ENCODE measurements at regions of chr2 and their contacts with region 1.

Region 1: DNA sequence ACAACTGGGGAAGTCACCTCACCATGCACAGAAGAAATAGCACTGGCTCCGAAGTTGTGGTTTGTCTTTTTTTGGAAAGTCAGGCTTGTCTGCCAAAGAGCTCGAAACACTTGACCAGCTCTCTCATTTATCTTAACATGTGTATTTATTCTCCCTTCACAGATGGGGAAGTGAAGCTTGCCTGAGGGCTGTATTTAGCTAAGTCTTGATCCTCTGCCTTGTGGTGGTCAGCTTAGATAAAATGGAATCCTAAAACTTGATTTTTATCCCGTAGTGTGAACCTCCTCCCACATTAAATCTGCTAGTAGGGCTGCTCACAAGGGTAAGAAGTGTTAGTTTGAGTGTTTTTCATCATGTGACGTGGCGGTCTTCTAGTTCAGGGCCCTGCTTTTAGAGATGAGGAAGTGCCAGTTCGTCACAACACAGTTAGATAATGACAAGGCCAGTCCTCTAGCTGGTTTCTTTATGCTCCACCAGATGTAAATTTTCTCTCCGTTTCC is 89.7 kb downstream of the TMEM247 start:
- DNase-seq: no peak
- ATAC-seq: no peak
- H3K4me3 Mint-ChIP-seq: no peak overlapping the region
- H3K27ac Mint-ChIP-seq: peak overlapping the region; percentile 14; the same call in 1 of the 2 replicates
- H3K4me1 Mint-ChIP-seq: peaks cover 35% of the 10 kb centered on the region
- H3K27me3 Mint-ChIP-seq: no peaks in the 10 kb centered on the region
- CTCF ChIP-seq: no peak

Region 2: DNA sequence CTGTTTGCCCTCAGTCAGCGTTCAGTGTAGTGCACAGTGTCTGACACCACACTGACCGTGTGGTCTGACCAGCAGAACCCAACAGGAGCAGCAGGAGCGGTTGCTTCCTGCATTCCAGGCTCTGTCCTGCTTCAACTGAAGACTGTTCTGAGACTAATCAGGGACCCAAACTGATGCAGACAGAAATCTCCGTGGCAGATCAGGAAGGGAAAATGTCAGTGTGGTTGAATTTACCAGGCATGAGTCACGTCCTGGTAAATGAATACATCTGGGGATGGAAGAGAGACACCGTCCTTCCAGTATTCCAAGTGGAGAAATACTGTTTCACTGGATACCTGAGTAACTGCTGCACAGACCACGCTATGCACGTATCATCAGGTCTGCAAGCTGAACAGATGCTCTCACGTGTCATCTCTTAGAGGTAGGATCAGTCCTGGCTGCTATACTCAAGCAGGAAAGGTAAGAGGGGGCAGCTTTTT is 495.5 kb before region 1 on chr2:
- CTCF ChIA-PET with region 1: no interaction called
- POLR2A ChIA-PET with region 1: no interaction called
- DNase-seq: no peak
- ATAC-seq: peak; percentile 24; the same call in 1 of the 2 replicates
- H3K4me3 Mint-ChIP-seq: no peak overlapping the region
- H3K27ac Mint-ChIP-seq: no peak overlapping the region
- H3K4me1 Mint-ChIP-seq: peaks cover 17% of the 10 kb centered on the region
- H3K27me3 Mint-ChIP-seq: no peaks in the 10 kb centered on the region
- CTCF ChIP-seq: no peak

Region 3: DNA sequence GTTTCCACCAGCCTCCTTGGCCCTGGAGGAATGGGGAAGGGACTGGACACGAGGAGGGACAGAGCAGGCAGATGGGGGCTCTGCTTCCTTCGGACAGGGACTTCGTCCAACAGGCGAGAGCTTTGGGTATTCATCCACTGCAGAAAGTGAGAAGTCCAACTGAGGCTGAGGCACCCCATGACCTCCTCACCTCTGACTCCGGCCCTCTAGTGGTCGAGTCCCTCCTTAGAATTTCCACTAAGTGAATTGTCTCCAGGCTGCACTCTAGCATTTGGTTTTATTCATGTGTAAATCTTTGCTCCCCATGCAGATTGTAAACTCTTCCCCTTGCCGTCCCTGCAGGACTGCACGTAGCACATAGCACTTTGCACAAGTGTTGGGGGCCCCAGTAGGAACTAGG is 14.1 kb before region 1 on chr2:
- CTCF ChIA-PET with region 1: interaction called, 32 read pairs
- POLR2A ChIA-PET with region 1: no interaction called
- DNase-seq: peak; percentile 62
- ATAC-seq: peak; percentile 92
- H3K4me3 Mint-ChIP-seq: peak overlapping the region; percentile 30; the same call in 1 of the 2 replicates
- H3K27ac Mint-ChIP-seq: peak overlapping the region; percentile 78
- H3K4me1 Mint-ChIP-seq: peaks cover 59% of the 10 kb centered on the region
- H3K27me3 Mint-ChIP-seq: no peaks in the 10 kb centered on the region
- CTCF ChIP-seq: peak; percentile 58

Region 4: GRCh38 chr2:46610021-46610420 is 40.9 kb after region 1 on chr2:
- CTCF ChIA-PET with region 1: no interaction called
- POLR2A ChIA-PET with region 1: no interaction called
- DNase-seq: no peak
- ATAC-seq: no peak
- H3K4me3 Mint-ChIP-seq: no peak overlapping the region
- H3K27ac Mint-ChIP-seq: no peak overlapping the region
- H3K4me1 Mint-ChIP-seq: peaks cover 3% of the 10 kb centered on the region
- H3K27me3 Mint-ChIP-seq: no peaks in the 10 kb centered on the region
- CTCF ChIP-seq: no peak